ENCODE measurements at regions of chr3 and their contacts with region 1.

Region 1: DNA sequence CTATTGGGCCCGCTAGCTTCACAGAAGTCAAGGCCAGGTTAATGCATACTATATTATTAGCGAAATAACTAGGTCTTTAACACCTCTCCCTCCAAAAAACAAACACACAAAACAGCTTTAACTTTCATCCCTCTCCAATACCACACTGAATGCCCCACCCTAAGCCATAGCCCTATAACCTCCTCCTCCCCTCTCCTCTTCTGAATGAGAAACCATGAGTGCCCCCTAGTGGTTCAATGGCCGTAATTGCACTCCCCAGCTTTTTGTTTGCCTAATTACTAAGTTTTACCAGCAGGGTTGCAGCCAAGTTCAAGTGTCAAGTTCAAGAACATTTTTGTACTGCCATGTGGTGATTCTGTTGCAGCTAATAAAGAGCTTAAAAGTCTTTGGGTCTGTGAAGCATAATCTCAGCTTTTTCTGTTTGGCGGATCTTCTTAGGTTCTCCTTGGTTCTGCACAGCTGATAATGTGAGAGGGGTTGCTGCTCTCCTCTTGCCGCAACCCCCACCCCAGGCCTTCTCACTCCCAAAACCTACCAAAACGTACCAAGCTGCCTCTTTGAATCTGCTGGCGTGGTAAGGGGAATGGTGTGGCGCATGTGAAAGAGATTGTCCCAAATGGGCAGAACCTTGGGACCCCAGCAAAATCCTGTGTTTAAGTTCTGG is 57.9 kb downstream of the RPL22L1 start:
- DNase-seq: peak; percentile 90
- H3K4me3 Mint-ChIP-seq: peak overlapping the region; percentile 55
- H3K27ac Mint-ChIP-seq: peak overlapping the region; percentile 82
- H3K4me1 Mint-ChIP-seq: peaks cover 37% of the 10 kb centered on the region
- H3K27me3 Mint-ChIP-seq: no peaks in the 10 kb centered on the region
- CTCF ChIP-seq: peak; percentile 89

Region 2: DNA sequence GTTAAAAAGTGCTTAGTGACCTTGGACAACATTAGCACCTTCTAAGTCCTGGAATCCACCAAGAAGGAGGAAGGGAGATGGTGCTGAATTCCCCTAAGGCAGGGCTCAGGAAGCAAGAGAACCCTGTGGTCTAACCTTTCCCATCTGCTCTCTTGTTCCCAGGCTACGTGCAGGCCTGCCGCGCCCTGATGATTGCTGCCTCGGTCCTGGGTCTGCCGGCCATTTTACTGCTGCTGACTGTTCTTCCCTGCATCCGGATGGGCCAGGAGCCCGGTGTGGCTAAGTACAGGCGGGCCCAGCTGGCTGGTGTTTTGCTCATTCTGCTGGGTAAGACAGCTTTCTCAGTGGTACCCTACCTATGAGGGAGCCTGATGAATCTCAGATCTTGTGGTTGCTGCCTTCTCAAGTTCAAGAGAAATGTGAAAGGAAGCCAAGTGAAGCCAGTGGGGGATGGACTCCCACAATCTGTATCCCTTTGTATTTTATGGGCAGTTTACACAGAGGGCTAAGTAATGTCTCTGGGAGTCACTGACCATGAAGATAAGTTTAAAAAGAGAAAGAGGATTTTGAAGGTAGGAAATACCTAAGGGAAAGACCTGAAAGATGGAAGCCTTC is 389.0 kb before region 1 on chr3:
- CTCF ChIA-PET with region 1: interaction called, 435 read pairs
- POLR2A ChIA-PET with region 1: no interaction called
- intact Hi-C with region 1: no loop called
- DNase-seq: no peak
- H3K4me3 Mint-ChIP-seq: no peak overlapping the region
- H3K27ac Mint-ChIP-seq: no peak overlapping the region
- H3K4me1 Mint-ChIP-seq: no peaks in the 10 kb centered on the region
- H3K27me3 Mint-ChIP-seq: no peaks in the 10 kb centered on the region
- CTCF ChIP-seq: no peak

Region 3: GRCh38 chr3:170493712-170494182 is 318.3 kb before region 1 on chr3:
- CTCF ChIA-PET with region 1: interaction called, 41 read pairs
- POLR2A ChIA-PET with region 1: interaction called, 3 read pairs
- intact Hi-C with region 1: no loop called
- DNase-seq: peak; percentile 27
- H3K4me3 Mint-ChIP-seq: no peak overlapping the region
- H3K27ac Mint-ChIP-seq: peak overlapping the region; percentile 49
- H3K4me1 Mint-ChIP-seq: no peaks in the 10 kb centered on the region
- H3K27me3 Mint-ChIP-seq: no peaks in the 10 kb centered on the region
- CTCF ChIP-seq: no peak

Region 4: GRCh38 chr3:170614214-170614966 is 197.7 kb before region 1 on chr3:
- CTCF ChIA-PET with region 1: interaction called, 9 read pairs
- POLR2A ChIA-PET with region 1: interaction called, 4 read pairs
- intact Hi-C with region 1: loop called (anchors 1 kb)
- DNase-seq: peak; percentile 92
- H3K4me3 Mint-ChIP-seq: no peak overlapping the region
- H3K27ac Mint-ChIP-seq: no peak overlapping the region
- H3K4me1 Mint-ChIP-seq: peaks cover 15% of the 10 kb centered on the region
- H3K27me3 Mint-ChIP-seq: no peaks in the 10 kb centered on the region
- CTCF ChIP-seq: no peak

Region 5: GRCh38 chr3:170772175-170772574 is 39.9 kb before region 1 on chr3:
- CTCF ChIA-PET with region 1: interaction called, 10 read pairs
- POLR2A ChIA-PET with region 1: no interaction called
- intact Hi-C with region 1: no loop called
- DNase-seq: no peak
- H3K4me3 Mint-ChIP-seq: no peak overlapping the region
- H3K27ac Mint-ChIP-seq: no peak overlapping the region
- H3K4me1 Mint-ChIP-seq: no peaks in the 10 kb centered on the region
- H3K27me3 Mint-ChIP-seq: no peaks in the 10 kb centered on the region
- CTCF ChIP-seq: no peak

Region 6: GRCh38 chr3:170869645-170870593 is 57.9 kb after region 1 on chr3 and contains the start of gene RPL22L1:
- CTCF ChIA-PET with region 1: interaction called, 5 read pairs
- POLR2A ChIA-PET with region 1: interaction called, 18 read pairs
- intact Hi-C with region 1: no loop called
- DNase-seq: peak; percentile 96
- H3K4me3 Mint-ChIP-seq: peak within 1 kb of the TSS; percentile 93
- H3K27ac Mint-ChIP-seq: peak within 1 kb of the TSS; percentile 97
- H3K4me1 Mint-ChIP-seq: peaks cover 10% of the 10 kb centered on the region
- H3K27me3 Mint-ChIP-seq: no peaks in the 10 kb centered on the region
- CTCF ChIP-seq: no peak
- total RNA-seq, gene RPL22L1: 205 and 409 TPM in 2 replicates

Measured in MCF 10A (cell line).